ENCODE measurements at regions of chr22 and their contacts with region 1.

Region 1: GRCh38 chr22:30005213-30005857 is 74.9 kb upstream of the HORMAD2 start:
- DNase-seq: peak; percentile 49 to 73
- H3K4me3 ChIP-seq: no peak overlapping the region
- H3K4me3 Mint-ChIP-seq: no peak overlapping the region
- H3K27ac Mint-ChIP-seq: no peak overlapping the region
- H3K4me1 ChIP-seq: peaks cover 3% of the 10 kb centered on the region; the same call in 1 of the 2 replicates
- H3K4me1 Mint-ChIP-seq: no peaks in the 10 kb centered on the region
- H3K27me3 ChIP-seq: no peaks in the 10 kb centered on the region
- H3K27me3 Mint-ChIP-seq: no peaks in the 10 kb centered on the region
- CTCF ChIP-seq: peak; percentile 91 to 95

Region 2: DNA sequence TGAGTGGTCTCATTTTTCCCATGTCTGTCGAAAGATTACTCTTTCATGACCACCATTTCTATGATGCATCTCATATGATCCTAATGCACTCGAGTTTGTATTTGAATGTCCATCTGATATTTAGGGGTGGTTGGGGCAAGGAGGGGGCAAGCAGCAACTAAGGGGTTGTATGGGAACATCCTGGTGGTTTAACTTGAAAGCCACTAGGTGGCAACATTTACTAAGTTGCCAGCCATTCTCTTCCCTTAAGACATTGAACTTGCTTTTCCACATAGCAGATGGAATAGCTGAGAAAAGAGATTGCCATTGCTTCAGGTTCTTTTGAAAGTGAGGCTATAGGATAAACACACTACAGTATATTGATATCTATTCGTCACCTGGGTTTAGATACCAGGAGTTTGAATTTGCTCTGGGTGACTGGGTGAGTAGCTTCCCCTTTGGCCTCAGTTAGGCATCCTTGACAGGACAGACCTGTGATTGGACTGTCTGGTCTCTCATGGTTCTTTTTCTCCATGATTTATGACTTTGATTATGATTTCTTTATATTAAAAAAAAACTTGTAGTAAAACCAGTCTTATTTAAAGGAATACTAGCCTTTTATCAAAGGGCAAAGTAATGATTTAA is 369.5 kb before region 1 on chr22:
- CTCF ChIA-PET with region 1: interaction called, 4 read pairs
- POLR2A ChIA-PET with region 1: no interaction called
- intact Hi-C with region 1: loop called (anchors 1 kb)
- DNase-seq: peak in 1 of 2 experiments; percentile 29
- H3K4me3 ChIP-seq: no peak overlapping the region
- H3K4me3 Mint-ChIP-seq: no peak overlapping the region
- H3K27ac Mint-ChIP-seq: no peak overlapping the region
- H3K4me1 ChIP-seq: peaks cover 8% of the 10 kb centered on the region
- H3K4me1 Mint-ChIP-seq: no peaks in the 10 kb centered on the region
- H3K27me3 ChIP-seq: no peaks in the 10 kb centered on the region
- H3K27me3 Mint-ChIP-seq: no peaks in the 10 kb centered on the region
- CTCF ChIP-seq: peak; percentile 64 to 69

Region 3: GRCh38 chr22:29701155-29701999 is 304.0 kb before region 1 on chr22:
- CTCF ChIA-PET with region 1: interaction called, 17 read pairs
- POLR2A ChIA-PET with region 1: no interaction called
- intact Hi-C with region 1: loop called (anchors 10 kb)
- DNase-seq: peak in 1 of 2 experiments; percentile 47
- H3K4me3 ChIP-seq: no peak overlapping the region
- H3K4me3 Mint-ChIP-seq: no peak overlapping the region
- H3K27ac Mint-ChIP-seq: no peak overlapping the region
- H3K4me1 ChIP-seq: peaks cover 5% of the 10 kb centered on the region
- H3K4me1 Mint-ChIP-seq: no peaks in the 10 kb centered on the region
- H3K27me3 ChIP-seq: no peaks in the 10 kb centered on the region
- H3K27me3 Mint-ChIP-seq: no peaks in the 10 kb centered on the region
- CTCF ChIP-seq: peak; percentile 28 to 41

Region 4: GRCh38 chr22:29837780-29838598 is 167.3 kb before region 1 on chr22 and contains the start of gene ASCC2:
- CTCF ChIA-PET with region 1: interaction called, 3 read pairs
- POLR2A ChIA-PET with region 1: no interaction called
- intact Hi-C with region 1: loop called (anchors 1 kb)
- DNase-seq: peak; percentile 98
- H3K4me3 ChIP-seq: peak within 1 kb of the TSS; percentile 97
- H3K4me3 Mint-ChIP-seq: peak within 1 kb of the TSS; percentile 83
- H3K27ac Mint-ChIP-seq: peak within 1 kb of the TSS; percentile 69
- H3K4me1 ChIP-seq: peaks cover 5% of the 10 kb centered on the region; the same call in 1 of the 2 replicates
- H3K4me1 Mint-ChIP-seq: peaks cover 10% of the 10 kb centered on the region
- H3K27me3 ChIP-seq: no peaks in the 10 kb centered on the region
- H3K27me3 Mint-ChIP-seq: no peaks in the 10 kb centered on the region
- CTCF ChIP-seq: no peak
- total RNA-seq, gene ASCC2: 61.4 and 68.8 TPM in 2 replicates